Activated naive CD8-positive, alpha-beta T cell treated with anti-CD3 and anti-CD28 coated beads, Interleukin-2, amount 10 ng/mL, durations not matched to agents 7 days and 5 days (primary cell): ENCODE measurements at regions of chr1 and their contacts with region 1.

Region 1: GRCh38 chr1:64966158-64966971 is at the start of gene JAK1:
- DNase-seq: peak; percentile 95
- ATAC-seq: peak; percentile 77
- H3K4me3 Mint-ChIP-seq: peak within 1 kb of the TSS; percentile 88
- H3K27ac Mint-ChIP-seq: peak within 1 kb of the TSS; percentile 90
- H3K4me1 Mint-ChIP-seq: peaks cover 48% of the 10 kb centered on the region
- H3K27me3 Mint-ChIP-seq: no peaks in the 10 kb centered on the region
- total RNA-seq, gene JAK1: 213 to 236 TPM

Region 2: GRCh38 chr1:64766385-64766784 is 200.0 kb before region 1 on chr1:
- POLR2A ChIA-PET with region 1: no interaction called
- DNase-seq: no peak
- ATAC-seq: no peak
- H3K4me3 Mint-ChIP-seq: no peak overlapping the region
- H3K27ac Mint-ChIP-seq: no peak overlapping the region
- H3K4me1 Mint-ChIP-seq: peaks cover 2% of the 10 kb centered on the region
- H3K27me3 Mint-ChIP-seq: no peaks in the 10 kb centered on the region

Region 3: DNA sequence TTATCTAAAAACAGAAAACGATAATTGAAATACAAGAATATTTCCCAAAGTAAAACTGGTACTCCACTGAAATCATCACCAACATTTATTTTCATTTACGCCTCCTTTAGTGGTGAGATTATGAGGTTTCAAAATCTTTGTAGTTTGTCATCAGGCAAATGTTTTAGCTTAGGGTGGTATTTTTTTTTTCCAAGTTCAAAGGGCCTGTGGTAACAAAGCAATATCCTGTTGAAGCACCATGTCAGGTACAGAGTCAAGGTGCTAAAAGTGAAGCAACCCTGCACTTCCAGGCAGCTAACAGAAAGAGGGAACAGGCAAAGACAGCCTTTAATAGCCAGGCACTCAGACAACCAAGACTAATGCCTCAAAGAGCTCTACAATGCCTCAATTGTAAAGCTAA is 89.2 kb before region 1 on chr1:
- POLR2A ChIA-PET with region 1: interaction called, 10 read pairs
- DNase-seq: no peak
- ATAC-seq: peak; percentile 93
- H3K4me3 Mint-ChIP-seq: peak overlapping the region; percentile 71
- H3K27ac Mint-ChIP-seq: peak overlapping the region; percentile 77
- H3K4me1 Mint-ChIP-seq: peaks cover 47% of the 10 kb centered on the region
- H3K27me3 Mint-ChIP-seq: no peaks in the 10 kb centered on the region

Region 4: DNA sequence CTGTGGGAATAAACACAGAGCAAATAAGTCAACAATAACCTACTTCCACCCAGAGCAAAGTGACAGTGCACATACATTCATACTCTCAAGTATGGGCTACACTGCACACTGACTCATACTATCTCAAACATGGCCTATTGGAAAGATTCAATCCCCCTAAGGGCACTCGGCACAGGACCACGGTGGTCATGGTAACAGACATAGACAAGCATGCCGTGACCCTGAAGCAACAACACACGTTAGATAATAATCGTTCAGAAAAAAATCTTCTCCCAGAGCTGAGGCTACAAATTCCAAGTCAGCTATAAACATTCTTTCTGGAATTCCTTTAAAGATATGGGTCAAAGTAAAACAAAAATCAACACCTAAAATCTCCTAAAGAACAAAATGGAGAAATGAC is 16.8 kb after region 1 on chr1:
- POLR2A ChIA-PET with region 1: no interaction called
- DNase-seq: no peak
- ATAC-seq: no peak
- H3K4me3 Mint-ChIP-seq: no peak overlapping the region
- H3K27ac Mint-ChIP-seq: no peak overlapping the region
- H3K4me1 Mint-ChIP-seq: peaks cover 17% of the 10 kb centered on the region
- H3K27me3 Mint-ChIP-seq: peaks cover 2% of the 10 kb centered on the region

Region 5: DNA sequence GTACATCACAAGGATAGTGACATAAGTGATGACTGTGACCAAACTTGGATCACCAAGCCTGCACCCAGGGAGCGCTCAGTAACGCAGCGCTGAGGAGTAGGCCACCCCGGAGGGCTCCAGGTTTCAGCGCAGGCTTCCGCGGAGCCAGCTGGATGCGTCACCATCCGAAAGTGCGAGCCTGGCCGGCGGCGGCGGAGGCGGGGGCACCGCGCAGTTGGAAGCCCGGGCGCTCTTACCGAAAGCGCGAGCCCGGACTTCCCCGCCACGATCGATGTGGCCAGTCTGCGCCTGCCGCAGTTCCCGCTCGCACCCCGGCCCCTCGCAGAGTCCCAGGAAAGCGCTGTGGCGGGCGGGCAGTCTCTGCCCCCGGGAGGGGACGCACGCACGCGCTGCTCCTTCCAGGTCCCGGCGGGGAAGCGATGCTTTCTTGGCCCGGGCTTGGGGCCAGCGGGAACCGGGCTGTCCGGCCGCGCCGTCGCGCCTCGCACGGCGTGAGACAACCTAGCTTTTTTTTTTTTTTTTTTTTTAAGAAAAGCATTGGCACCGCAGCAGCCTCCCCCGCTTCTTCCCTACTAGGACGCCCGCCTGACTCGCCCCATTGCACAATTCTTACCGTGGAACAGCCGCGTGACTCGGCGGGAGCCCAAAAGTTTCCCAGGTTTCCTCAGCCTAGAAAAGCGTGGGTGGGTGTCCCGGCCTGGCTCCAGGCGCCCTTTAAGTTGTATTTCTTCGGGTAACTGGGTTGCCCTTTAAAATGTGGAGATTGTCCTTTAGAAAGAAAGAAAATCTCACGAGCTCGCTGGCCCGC is 36.3 kb after region 1 on chr1:
- POLR2A ChIA-PET with region 1: interaction called, 11 read pairs
- DNase-seq: peak; percentile 76
- ATAC-seq: peak; percentile 82
- H3K4me3 Mint-ChIP-seq: peak overlapping the region; percentile 79
- H3K27ac Mint-ChIP-seq: peak overlapping the region; percentile 50
- H3K4me1 Mint-ChIP-seq: peaks cover 22% of the 10 kb centered on the region
- H3K27me3 Mint-ChIP-seq: peaks cover 18% of the 10 kb centered on the region